ENCODE measurements at regions of chr6 and their contacts with region 1.

Region 1: DNA sequence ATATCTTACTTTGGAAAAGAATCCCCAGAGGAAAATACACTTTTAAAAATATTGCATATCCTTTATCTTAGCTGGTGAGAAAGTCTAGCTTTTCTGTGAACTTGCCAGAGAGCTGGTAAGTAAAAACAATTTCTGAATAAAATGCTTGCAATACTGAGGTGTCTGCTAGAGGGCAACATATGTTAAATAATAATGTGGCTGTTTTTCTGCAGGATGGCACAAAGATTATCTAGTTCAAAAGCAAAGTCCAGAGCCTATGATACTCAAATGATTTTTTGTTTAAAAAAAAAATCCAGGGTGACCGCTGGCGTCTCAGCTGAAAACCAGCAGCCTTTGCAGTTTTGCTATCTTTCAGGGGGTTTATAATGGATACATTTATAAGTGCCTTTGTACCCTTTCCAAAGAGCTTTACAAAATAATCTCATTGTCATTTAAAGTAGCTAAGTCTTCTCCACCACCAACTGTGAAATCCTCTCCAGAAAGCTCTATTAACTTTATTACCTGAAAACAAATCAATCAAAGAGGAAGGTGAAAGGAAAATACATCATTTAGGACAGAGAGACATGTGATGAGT is 194.9 kb downstream of the PHACTR1 start:
- DNase-seq: no peak
- H3K4me3 ChIP-seq: no peak overlapping the region
- H3K27ac ChIP-seq: no peak overlapping the region
- H3K4me1 ChIP-seq: no peaks in the 10 kb centered on the region
- H3K27me3 ChIP-seq: no peaks in the 10 kb centered on the region
- CTCF ChIP-seq: peak; percentile 24 to 68 (median 59)
- POLR2A ChIP-seq: no peak

Region 2: DNA sequence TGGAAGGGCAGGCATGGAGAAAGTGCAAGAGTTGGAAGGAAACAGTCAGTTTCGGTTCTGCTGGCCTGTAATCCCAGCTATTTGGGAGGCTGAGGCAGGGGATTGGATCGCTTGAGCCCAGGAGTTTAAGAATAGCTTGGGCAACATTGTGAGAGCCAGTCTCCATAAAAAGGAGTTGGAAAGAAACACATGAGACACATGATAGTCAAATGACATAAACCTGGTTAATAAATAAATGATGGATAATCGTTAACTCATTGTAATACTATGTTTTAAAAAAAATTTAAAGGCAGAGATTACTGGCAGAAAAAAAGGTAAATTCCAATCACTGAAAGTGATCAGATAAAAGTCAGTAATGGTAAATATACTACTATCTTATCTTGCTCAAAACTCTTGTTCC is 232.1 kb before region 1 on chr6:
- intact Hi-C with region 1: no loop called
- DNase-seq: no peak
- H3K4me3 ChIP-seq: no peak overlapping the region
- H3K27ac ChIP-seq: no peak overlapping the region
- H3K4me1 ChIP-seq: no peaks in the 10 kb centered on the region
- H3K27me3 ChIP-seq: peaks cover 5% of the 10 kb centered on the region
- CTCF ChIP-seq: no peak
- POLR2A ChIP-seq: no peak

Region 3: DNA sequence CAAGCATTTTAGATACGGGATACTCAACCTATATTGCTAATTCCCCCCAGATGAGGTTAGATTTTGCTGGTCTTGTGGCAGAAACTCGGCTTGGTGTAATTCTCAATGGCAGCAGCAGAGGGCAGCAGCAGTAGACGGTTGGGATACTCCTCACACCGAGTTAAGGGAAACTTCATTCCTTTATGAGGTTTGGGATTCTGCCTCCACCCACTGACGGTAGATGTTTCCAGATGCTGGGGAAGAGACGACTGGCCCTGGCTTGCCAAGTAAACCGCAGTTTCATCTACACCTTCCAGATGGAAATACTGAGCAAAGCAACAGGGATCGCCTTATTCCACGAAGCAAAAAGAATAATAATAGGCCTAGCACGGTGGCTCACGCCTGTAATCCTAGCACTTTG is 425.1 kb after region 1 on chr6:
- intact Hi-C with region 1: loop called (anchors 5 kb)
- DNase-seq: peak in 6 of 7 donors; percentile 71 to 95 (median 82)
- H3K4me3 ChIP-seq: no peak overlapping the region
- H3K27ac ChIP-seq: no peak overlapping the region
- H3K4me1 ChIP-seq: no peaks in the 10 kb centered on the region
- H3K27me3 ChIP-seq: no peaks in the 10 kb centered on the region
- CTCF ChIP-seq: peak; percentile 78 to 94 (median 88)
- POLR2A ChIP-seq: no peak

Region 4: DNA sequence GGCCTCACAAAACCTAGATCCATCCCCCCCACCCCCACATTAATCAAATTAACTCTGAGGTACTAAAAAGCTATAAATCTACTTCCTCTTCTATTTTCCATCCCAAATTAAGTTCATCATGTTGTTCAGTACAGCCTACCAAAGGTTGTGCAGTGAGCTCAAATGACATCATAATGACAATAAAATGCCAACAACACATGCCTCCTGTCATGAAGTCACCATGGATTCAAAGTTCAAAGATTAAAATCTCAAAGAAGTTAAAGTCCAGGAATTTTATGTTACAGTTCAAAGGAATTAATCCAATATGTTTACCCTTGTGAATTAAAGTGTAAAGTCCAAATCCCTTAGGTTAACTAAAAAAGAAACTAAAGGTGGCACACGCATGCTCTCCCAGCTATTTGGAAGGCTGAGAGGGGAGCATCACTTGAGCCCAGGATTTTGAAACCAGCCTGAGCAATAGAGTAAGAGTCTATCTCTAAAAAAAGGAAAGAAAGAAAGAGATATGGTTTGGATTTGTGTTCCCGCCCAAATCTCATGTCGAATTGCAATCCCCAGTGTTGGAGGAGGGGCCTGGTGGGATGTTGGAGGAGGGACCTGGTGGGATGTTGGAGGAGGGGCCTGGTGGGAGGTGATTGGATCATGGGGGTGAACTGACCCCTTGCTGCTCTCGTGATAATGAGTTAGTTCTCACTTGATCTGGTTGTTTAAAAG is 637.2 kb after region 1 on chr6:
- intact Hi-C with region 1: loop called in 1 of 2 experiments (anchors 10 kb)
- DNase-seq: no peak
- H3K4me3 ChIP-seq: no peak overlapping the region
- H3K27ac ChIP-seq: no peak overlapping the region
- H3K4me1 ChIP-seq: no peaks in the 10 kb centered on the region
- H3K27me3 ChIP-seq: no peaks in the 10 kb centered on the region
- CTCF ChIP-seq: no peak
- POLR2A ChIP-seq: no peak